ENCODE measurements at regions of chrX and their contacts with region 1.

Region 1: GRCh38 chrX:69282893-69283690 is 117.8 kb upstream of the PJA1 start:
- DNase-seq: no peak
- H3K4me3 Mint-ChIP-seq: no peak overlapping the region
- H3K27ac Mint-ChIP-seq: no peak overlapping the region
- H3K4me1 Mint-ChIP-seq: no peaks in the 10 kb centered on the region
- H3K27me3 Mint-ChIP-seq: peaks cover 4% of the 10 kb centered on the region

Region 2: DNA sequence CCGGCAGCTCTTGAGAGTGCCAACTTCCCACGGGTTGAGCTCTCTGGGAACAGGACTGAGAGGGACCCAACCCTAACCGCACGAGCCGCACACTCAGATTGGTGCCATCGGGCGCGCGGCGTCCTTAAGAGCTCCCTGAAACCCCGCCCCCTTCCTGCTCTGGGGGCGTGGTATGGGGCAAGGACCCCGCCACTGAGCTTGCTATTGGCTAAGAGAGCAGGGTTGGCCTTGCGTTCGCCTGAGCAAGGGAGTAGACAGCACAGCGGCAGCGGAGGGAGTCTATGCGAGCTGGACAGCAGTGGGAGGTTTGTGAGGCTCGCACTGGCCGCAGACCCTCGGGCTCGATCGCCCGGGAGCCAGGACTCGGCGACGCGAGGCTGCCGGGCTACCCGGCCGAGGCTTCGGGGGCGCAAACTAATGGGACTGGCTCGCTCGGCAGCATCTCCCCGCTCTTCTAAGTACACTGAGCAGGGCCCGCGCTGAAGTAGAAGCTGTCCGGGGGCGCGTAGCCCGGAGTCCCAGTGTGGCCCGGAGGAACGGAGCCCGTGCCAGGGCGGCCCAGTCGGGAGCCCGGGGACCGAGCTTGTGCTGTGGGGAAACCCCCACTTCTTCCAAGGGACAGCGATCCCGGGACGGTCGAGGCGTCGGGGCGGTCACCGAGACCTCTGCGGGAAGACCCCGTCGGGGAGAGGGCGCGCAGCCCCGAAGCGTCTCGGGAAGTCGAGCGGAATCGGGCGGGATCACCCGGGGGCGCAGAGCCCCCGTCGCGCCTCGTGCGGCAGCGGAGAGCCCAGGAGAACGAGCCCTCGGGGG is 454.1 kb before region 1 on chrX and contains the start of gene EFNB1:
- CTCF ChIA-PET with region 1: interaction called, 10 read pairs
- DNase-seq: peak; percentile 90
- H3K4me3 Mint-ChIP-seq: peak within 1 kb of the TSS; percentile 76
- H3K27ac Mint-ChIP-seq: peak within 1 kb of the TSS; percentile 81
- H3K4me1 Mint-ChIP-seq: peaks cover 23% of the 10 kb centered on the region
- H3K27me3 Mint-ChIP-seq: peaks cover 35% of the 10 kb centered on the region

Region 3: DNA sequence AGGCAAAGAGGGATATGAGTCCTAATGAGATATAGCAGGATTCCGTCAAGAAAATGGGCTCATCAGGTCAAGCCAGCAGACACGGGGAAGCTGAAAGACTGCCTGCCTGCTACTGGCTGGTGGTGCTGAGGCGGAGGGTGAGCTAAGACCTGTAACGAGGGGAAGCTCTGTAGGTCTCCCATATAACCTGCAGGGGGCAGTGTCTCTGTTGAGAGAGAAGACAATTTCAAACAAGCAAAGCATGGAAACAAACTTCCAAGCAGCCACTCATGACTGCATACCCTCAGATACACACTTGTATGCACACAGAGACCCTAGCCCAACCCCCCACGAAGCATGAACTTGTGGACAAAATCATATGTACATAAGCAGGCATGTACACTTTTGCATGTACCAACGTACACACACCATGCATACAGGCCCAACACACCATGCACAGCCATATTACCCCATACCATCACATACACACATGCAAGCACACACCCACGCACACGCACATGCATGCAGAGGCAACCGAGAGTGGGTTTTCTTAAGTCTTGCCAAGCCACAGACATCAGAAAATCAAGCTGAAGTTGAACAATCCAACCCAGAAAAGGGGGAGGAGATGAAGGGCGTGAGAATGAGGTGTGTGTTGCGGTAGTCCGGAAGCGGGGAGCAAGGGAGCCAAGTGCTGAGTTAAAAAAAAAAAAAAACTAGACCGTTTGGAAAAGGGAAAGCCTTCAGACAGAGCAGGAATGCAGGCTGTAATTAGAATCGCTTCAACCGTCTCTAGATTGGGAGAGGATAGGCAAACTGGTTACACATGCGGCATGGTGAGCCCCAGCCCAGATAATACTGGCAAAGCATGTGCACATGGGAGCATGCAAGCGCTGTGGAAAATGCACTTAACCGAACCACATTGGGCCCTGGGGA is 188.9 kb before region 1 on chrX:
- CTCF ChIA-PET with region 1: no interaction called
- DNase-seq: peak; percentile 49
- H3K4me3 Mint-ChIP-seq: no peak overlapping the region
- H3K27ac Mint-ChIP-seq: no peak overlapping the region
- H3K4me1 Mint-ChIP-seq: no peaks in the 10 kb centered on the region
- H3K27me3 Mint-ChIP-seq: no peaks in the 10 kb centered on the region

Region 4: GRCh38 chrX:69305333-69306062 is 22.4 kb after region 1 on chrX:
- CTCF ChIA-PET with region 1: no interaction called
- DNase-seq: no peak
- H3K4me3 Mint-ChIP-seq: no peak overlapping the region
- H3K27ac Mint-ChIP-seq: no peak overlapping the region
- H3K4me1 Mint-ChIP-seq: no peaks in the 10 kb centered on the region
- H3K27me3 Mint-ChIP-seq: peaks cover 21% of the 10 kb centered on the region

Region 5: DNA sequence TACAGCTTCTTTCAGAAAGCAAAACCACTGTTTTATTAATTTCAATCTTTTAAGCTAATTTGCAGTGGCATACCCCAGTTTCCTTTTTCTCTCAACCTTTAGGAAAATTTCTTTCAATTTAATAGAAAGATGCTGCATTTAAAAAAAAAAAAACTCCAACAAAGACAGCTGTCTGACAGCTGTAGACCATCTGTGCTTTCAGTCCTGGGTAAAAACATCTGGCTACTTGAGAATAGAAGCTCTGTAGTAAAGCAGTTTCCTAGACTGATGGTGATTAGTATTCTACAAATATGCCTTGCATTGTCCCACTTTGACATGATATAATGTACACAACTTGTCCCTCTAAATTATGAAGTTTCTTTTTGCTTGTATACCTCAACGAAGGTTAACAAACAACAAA is 530.6 kb after region 1 on chrX:
- CTCF ChIA-PET with region 1: no interaction called
- DNase-seq: no peak
- H3K4me3 Mint-ChIP-seq: no peak overlapping the region
- H3K27ac Mint-ChIP-seq: no peak overlapping the region
- H3K4me1 Mint-ChIP-seq: peaks cover 14% of the 10 kb centered on the region
- H3K27me3 Mint-ChIP-seq: no peaks in the 10 kb centered on the region

Measured in activated naive CD4-positive, alpha-beta T cell treated with anti-CD3 and anti-CD28 coated beads, Interleukin-2, amount 10 ng/mL, durations not matched to agents 7 days and 5 days (primary cell).